H1 (cell line): ENCODE measurements at regions of chr6 and their contacts with region 1.

Region 1: DNA sequence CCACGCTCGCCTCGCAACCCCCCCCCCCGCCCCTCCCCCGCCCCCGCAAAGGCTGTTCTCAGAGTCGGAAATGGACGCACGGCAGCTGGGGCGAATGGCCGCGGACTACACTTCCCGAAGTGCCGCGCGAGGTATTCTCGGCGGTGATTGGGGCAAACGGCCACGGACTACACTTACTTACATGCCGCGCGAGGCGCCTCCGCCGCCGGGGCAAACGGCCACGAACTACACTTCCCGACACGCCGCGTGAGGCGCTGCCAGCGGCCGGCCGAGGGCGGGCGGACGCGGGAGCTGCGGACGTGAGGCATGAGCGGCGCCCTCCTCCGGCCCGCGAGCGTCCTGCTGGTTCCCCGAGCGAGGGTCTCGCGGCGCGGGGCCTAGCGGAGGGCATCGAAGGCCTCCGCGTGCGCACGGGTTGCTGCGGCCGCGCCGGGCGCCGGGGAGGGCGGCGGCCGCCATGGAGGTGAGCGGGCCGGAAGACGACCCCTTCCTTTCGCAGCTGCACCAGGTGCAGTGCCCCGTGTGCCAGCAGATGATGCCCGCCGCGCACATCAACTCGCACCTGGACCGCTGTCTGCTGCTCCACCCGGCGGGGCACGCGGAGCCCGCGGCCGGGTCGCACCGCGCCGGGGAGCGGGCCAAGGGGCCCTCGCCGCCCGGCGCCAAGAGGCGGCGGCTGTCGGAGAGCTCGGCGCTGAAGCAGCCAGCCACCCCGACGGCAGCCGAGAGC is at the start of gene WRNIP1:
- DNase-seq: peak; percentile 92 to 95
- H3K4me3 ChIP-seq: peak within 1 kb of the TSS; percentile 81 to 94 (median 84)
- H3K27ac ChIP-seq: peak within 1 kb of the TSS; percentile 40
- H3K4me1 ChIP-seq: peaks cover 0 to 11% (median 8%) of the 10 kb centered on the region in 4 experiments; a peak in 4 of 7 replicates
- H3K27me3 ChIP-seq: no peaks in the 10 kb centered on the region
- CTCF ChIP-seq: peak; percentile 65 to 70 (median 66)
- EP300 ChIP-seq: peak in 1 of 2 experiments; percentile 58; a peak in 1 of 3 replicates
- POLR2A ChIP-seq: no peak
- RAD21 ChIP-seq: peak; percentile 9 to 23; a peak in 1 of 4 replicates
- total RNA-seq, gene WRNIP1: 39.2 TPM in 2 replicates

Region 2: DNA sequence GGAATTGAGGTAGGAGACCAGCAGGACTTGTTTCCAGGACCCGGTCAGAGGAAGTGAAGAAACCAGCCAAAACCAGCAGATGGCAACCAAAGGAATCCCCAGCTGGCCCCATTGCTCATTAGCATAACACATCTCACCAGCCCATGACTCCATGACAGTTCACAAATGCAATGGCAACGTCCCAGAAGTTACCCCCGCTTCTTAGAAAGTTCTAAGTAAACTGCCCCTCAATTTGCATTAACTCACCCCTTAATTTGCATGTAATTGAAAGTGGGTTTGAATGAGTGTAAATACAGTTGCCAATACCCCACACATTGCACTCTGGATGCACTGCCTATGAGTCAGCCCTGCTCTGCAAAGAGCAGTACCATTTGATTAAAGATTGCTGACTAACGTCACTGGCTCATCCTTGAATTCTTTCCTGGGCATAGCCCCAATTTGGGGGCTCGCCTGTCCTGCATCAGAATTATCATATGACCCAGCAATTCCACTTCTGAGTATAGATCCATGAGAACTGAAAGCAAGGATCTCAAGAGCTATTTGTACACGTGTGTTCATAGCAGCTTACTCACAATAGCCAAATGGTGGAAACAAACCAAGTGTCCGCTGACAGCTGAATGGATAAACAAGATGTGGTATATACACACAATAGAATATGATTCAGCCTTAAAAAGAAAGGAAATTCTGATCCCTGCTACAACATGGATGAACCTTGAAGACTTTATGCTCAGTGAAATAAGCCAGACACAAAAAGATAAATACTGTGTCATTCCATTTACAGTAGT is 51.0 kb before region 1 on chr6:
- CTCF ChIA-PET with region 1: no interaction called
- POLR2A ChIA-PET with region 1: no interaction called
- DNase-seq: no peak
- H3K4me3 ChIP-seq: no peak overlapping the region; a peak in 1 of 8 replicates
- H3K27ac ChIP-seq: no peak overlapping the region
- H3K4me1 ChIP-seq: 0 out of 7 replicates have a peak, but pooled peaks cover 0 to 2% (median 0%) of the 10 kb centered on the region in 4 experiments
- H3K27me3 ChIP-seq: no peaks in the 10 kb centered on the region
- CTCF ChIP-seq: no peak
- EP300 ChIP-seq: no peak
- POLR2A ChIP-seq: no peak
- RAD21 ChIP-seq: no peak

Region 3: DNA sequence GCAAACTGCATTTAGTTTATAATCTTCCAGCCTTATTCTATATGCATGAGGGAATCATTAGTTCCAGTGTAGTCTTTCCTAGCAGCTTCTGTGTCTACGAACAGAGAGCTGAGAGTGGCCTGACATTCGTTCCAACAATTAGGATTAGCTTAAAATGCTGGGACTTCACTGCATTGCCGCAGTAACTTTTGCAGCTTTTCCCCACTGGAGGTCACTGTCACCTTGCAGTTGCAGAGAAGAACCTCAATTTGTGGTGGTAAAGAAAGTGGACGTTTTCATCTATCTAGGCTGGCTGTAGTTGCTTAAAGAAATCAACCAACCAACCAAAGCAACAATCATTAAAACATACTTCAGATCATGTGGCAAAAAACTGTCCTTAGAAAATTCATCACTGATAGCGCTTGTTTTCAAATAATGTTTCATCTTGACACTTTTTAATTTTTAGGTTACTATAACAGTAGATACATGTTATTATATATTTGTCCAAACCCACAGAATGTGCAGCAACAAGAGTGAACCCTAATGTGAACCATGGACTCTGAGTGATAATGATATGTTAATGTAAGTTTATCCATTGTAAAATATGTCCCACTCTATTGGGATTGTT is 26.9 kb before region 1 on chr6:
- CTCF ChIA-PET with region 1: interaction called, 163 read pairs
- POLR2A ChIA-PET with region 1: no interaction called
- DNase-seq: peak in 1 of 2 experiments; percentile 64
- H3K4me3 ChIP-seq: no peak overlapping the region
- H3K27ac ChIP-seq: no peak overlapping the region
- H3K4me1 ChIP-seq: peaks cover 3 to 20% (median 6%) of the 10 kb centered on the region in 4 experiments
- H3K27me3 ChIP-seq: no peaks in the 10 kb centered on the region
- CTCF ChIP-seq: peak; percentile 61 to 93 (median 89)
- EP300 ChIP-seq: no peak
- POLR2A ChIP-seq: no peak
- RAD21 ChIP-seq: peak; percentile 93 to 96

Region 4: DNA sequence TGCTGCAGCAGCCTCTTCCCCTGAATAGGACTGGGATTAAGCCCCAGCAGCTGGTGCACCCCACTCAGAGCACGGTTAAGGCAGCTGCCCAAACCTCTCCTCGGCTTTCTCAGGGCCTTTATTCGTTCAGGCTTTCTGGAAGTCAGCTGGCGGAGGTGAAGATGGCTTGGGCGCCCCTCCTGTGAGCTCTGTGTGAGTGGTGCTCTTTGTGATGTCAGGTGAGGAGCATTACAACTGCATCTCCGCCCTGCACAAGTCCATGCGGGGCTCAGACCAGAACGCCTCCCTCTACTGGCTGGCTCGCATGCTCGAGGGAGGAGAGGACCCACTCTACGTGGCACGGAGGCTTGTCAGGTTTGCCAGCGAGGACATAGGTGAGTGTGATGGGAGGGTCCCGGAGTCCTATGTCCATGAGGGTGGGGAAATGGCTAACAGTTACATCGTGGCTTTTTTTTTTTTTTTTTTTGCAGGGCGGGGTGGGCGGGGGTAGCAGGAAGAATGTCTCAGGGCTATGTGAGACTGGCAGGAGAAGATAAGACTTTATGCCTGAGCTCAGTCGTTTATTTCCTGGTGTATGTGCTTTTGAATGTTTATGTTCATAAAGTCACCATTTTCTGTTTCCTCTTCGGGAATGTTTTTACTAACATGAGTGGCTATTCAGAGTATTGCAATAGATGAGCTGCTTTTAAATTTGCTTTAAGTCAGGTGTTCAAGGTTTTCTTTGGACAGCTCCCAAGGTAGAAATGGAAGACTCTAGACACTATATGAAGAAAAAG is 18.0 kb after region 1 on chr6:
- CTCF ChIA-PET with region 1: interaction called, 9 read pairs
- POLR2A ChIA-PET with region 1: interaction called, 21 read pairs
- DNase-seq: peak in 1 of 2 experiments; percentile 69
- H3K4me3 ChIP-seq: no peak overlapping the region
- H3K27ac ChIP-seq: no peak overlapping the region
- H3K4me1 ChIP-seq: peaks cover 0 to 3% (median 0%) of the 10 kb centered on the region in 4 experiments; a peak in 2 of 7 replicates
- H3K27me3 ChIP-seq: no peaks in the 10 kb centered on the region
- CTCF ChIP-seq: peak; percentile 11 to 66 (median 54); a peak in 3 of 4 replicates
- EP300 ChIP-seq: no peak
- POLR2A ChIP-seq: no peak
- RAD21 ChIP-seq: peak in 1 of 2 experiments; percentile 24; a peak in 1 of 4 replicates

Region 5: DNA sequence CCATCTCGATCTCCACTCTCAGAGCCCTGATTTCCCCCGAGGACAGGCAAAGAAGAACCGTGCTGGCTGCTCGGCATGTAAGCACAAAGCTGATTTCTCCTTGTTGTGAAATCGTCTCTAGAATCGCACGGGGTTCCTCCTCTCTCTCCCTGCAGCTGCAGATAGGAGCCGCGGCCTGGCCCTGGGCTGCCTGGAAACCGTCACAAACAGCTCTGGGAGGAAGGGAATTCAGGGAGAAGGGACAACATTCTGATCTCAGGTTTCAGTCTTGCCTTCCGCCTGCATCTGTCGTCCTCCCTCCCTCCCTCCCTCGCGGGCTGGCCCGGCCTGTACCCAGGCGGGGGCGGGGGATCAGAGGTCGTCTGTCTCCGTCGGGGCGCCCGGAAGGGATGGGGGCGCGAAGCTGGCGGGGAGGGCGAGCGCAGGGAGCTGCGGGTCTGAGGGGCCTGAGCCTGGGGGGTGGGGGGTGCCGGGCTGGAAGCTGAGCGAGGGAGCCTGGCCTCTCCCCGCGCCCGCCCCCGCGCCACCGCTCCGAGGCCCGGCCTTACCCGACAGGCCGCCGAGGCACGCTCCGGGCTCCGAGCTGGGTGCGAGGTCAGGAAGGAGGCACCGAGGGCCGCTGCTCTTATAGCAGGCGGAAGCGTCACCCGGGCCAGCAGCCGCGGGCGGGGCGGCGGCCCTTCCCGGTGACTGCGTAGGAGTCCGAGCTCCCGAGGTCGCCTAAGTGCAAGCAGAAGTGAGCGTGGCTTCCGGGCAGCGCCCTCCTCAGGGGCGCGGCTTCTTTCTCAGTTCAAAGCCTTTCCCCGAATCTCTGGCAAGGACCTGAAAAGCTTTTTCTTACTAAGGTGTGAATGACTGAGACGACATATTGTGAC is 76.2 kb after region 1 on chr6 and contains the start of gene SERPINB1:
- CTCF ChIA-PET with region 1: interaction called, 14 read pairs
- POLR2A ChIA-PET with region 1: interaction called, 7 read pairs
- DNase-seq: peak; percentile 69 to 83
- H3K4me3 ChIP-seq: peak within 1 kb of the TSS; percentile 21 to 62 (median 53)
- H3K27ac ChIP-seq: peak within 1 kb of the TSS; percentile 87
- H3K4me1 ChIP-seq: peaks cover 8 to 17% (median 10%) of the 10 kb centered on the region in 4 experiments
- H3K27me3 ChIP-seq: no peaks in the 10 kb centered on the region
- CTCF ChIP-seq: peak in 2 of 3 experiments; percentile 5 to 17; a peak in 2 of 4 replicates
- EP300 ChIP-seq: peak in 1 of 2 experiments; percentile 34; a peak in 1 of 3 replicates
- POLR2A ChIP-seq: peak; percentile 59 to 79
- RAD21 ChIP-seq: peak in 1 of 2 experiments; percentile 19; a peak in 1 of 4 replicates
- total RNA-seq, gene SERPINB1: 17.3 and 20.0 TPM in 2 replicates

Region 6: GRCh38 chr6:3139090-3139903 is 374.0 kb after region 1 on chr6:
- CTCF ChIA-PET with region 1: no interaction called
- POLR2A ChIA-PET with region 1: no interaction called
- DNase-seq: no peak
- H3K4me3 ChIP-seq: no peak overlapping the region
- H3K27ac ChIP-seq: no peak overlapping the region
- H3K4me1 ChIP-seq: peaks cover 0 to 7% (median 3%) of the 10 kb centered on the region in 4 experiments; a peak in 5 of 7 replicates
- H3K27me3 ChIP-seq: no peaks in the 10 kb centered on the region
- CTCF ChIP-seq: no peak
- EP300 ChIP-seq: no peak
- POLR2A ChIP-seq: no peak
- RAD21 ChIP-seq: no peak